Colonic mucosa (tissue), 4 donors: ENCODE measurements at regions of chr5 and their contacts with region 1.

Region 1: DNA sequence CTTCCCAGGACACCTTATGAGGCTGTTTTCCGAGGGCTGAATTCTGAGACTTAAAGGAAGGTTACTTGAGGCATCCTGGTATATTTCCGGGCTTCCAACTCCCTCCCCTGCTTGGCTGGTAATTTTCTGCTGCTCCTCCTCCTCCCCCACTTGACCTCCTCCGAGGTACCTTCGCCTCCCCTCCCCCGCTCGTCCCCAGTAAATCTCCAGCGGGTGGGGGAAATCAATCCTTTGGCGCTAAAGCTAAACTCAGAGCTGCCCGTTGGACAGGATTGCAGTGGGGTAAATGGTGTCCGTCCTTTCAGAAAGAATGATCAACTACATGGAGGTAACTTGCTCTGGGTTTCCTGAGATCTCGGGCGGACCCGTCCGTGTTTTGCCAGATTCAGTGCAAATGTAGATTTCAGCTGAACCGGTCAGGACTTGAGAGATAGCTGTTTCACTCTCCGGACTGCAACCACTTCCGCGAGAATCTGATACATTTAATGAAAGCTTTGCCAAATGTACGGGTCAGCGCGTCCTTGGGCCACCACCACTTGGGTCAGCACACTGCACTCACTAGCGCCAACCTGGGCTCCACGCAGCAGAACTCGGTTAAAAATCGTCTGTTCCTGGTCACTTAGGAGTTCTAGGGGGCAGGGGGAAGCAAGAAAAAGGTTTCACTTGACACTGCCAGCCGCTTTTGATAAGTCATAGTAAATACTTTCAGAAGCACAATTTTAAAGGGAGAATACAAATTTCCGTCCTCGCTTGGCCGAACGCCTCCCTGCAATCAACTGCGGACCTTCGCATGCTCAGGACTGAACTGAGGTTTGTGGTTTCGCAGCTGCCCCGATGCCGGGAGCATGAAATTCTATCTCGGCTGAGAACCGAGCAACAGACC is 4.6 kb upstream of the ISL1 start:
- DNase-seq: no peak
- H3K4me3 ChIP-seq: no peak overlapping the region
- H3K27ac ChIP-seq: no peak overlapping the region
- H3K4me1 ChIP-seq: no peaks in the 10 kb centered on the region
- H3K27me3 ChIP-seq: peaks cover 52% of the 10 kb centered on the region
- CTCF ChIP-seq: no peak

Region 2: GRCh38 chr5:51194671-51195070 is 184.0 kb before region 1 on chr5:
- intact Hi-C with region 1: no loop called
- DNase-seq: no peak
- H3K4me3 ChIP-seq: no peak overlapping the region
- H3K27ac ChIP-seq: no peak overlapping the region
- H3K4me1 ChIP-seq: no peaks in the 10 kb centered on the region
- H3K27me3 ChIP-seq: no peaks in the 10 kb centered on the region
- CTCF ChIP-seq: no peak

Region 3: GRCh38 chr5:51960617-51961115 is 582.0 kb after region 1 on chr5:
- intact Hi-C with region 1: loop called (anchors 10 kb)
- DNase-seq: no peak
- H3K4me3 ChIP-seq: no peak overlapping the region
- H3K27ac ChIP-seq: no peak overlapping the region
- H3K4me1 ChIP-seq: no peaks in the 10 kb centered on the region
- H3K27me3 ChIP-seq: no peaks in the 10 kb centered on the region
- CTCF ChIP-seq: peak; percentile 27

Region 4: GRCh38 chr5:52007230-52007858 is 628.7 kb after region 1 on chr5:
- intact Hi-C with region 1: loop called (anchors 5 kb)
- DNase-seq: peak; percentile 26
- H3K4me3 ChIP-seq: no peak overlapping the region
- H3K27ac ChIP-seq: no peak overlapping the region
- H3K4me1 ChIP-seq: no peaks in the 10 kb centered on the region
- H3K27me3 ChIP-seq: no peaks in the 10 kb centered on the region
- CTCF ChIP-seq: peak; percentile 51